Calu3 (cell line): ENCODE measurements at regions of chr3 and their contacts with region 1.

Region 1: DNA sequence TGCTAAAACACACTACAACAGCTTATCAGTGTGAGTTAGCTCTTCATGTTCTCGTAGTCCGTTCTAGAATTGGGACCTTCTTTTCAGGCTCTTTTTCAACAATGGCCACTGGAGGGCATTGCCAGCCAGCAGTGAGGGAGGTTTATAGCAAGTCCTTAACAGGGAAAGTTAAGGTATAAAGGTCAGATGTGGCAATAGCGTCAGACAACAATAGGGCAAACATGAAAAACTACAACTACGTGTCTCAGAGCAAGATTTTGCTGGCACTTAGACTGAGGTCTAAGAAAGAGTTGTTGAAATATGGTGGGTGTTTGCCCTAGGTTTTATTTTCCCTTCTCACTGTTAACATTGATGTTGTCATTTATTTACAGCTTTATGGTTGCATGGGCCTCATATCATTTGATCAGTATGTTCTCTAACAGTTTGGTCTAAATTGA is 161.4 kb downstream of the GMNC start:
- DNase-seq: peak; percentile 81
- H3K4me3 Mint-ChIP-seq: no peak overlapping the region
- H3K27ac Mint-ChIP-seq: peak overlapping the region; percentile 33
- H3K4me1 Mint-ChIP-seq: peaks cover 43% of the 10 kb centered on the region
- H3K27me3 Mint-ChIP-seq: no peaks in the 10 kb centered on the region
- CTCF ChIP-seq: peak; percentile 85

Region 2: DNA sequence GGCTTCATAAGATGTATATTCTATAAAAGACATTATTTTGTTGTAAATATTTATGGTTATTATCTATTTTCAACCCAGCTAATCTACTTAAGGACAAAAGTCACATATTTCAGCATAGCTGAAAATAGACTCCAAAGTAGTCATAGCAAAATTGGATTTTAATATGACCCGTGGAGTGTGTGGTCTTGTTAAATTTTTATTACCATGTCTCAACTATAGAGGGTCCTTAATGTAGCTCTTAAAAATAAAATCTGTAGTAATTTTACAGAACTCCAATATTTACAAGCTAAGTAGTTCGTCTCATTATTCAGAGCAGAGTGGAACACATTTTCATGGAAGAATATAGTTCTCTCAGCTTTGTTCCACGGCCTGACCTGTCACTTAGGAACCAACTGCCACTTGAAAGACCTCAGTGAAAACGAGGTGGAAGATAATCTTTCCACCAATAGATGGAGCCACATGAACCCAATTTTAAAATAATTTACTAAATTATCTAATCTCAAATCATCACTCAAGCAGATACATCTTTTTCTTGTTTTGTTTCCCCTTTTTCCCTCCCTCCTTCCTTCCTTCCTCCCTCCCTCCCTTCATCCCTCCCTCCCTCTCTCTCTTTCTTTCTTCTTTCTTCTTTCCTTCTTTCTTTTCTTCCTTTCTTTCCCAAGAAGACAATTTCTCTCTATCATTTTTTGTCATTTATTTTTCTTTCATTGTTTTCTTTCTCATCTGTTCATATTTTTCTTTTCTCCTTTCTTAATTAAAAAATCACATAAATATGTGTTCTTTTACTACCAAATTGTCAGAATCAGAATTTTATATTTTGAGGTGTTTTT is 476.0 kb before region 1 on chr3:
- CTCF ChIA-PET with region 1: interaction called, 3 read pairs
- intact Hi-C with region 1: loop called (anchors 5 kb)
- DNase-seq: peak; percentile 37
- H3K4me3 Mint-ChIP-seq: no peak overlapping the region
- H3K27ac Mint-ChIP-seq: no peak overlapping the region
- H3K4me1 Mint-ChIP-seq: peaks cover 7% of the 10 kb centered on the region
- H3K27me3 Mint-ChIP-seq: no peaks in the 10 kb centered on the region
- CTCF ChIP-seq: peak; percentile 58

Region 3: GRCh38 chr3:190566043-190566933 is 134.8 kb before region 1 on chr3:
- CTCF ChIA-PET with region 1: interaction called, 5 read pairs
- intact Hi-C with region 1: loop called (anchors 5 kb)
- DNase-seq: peak; percentile 98
- H3K4me3 Mint-ChIP-seq: peak overlapping the region; percentile 7
- H3K27ac Mint-ChIP-seq: peak overlapping the region; percentile 84
- H3K4me1 Mint-ChIP-seq: peaks cover 62% of the 10 kb centered on the region
- H3K27me3 Mint-ChIP-seq: no peaks in the 10 kb centered on the region
- CTCF ChIP-seq: no peak

Region 4: GRCh38 chr3:190862209-190863118 is 161.3 kb after region 1 on chr3 and contains the start of gene GMNC:
- CTCF ChIA-PET with region 1: interaction called, 9 read pairs
- intact Hi-C with region 1: loop called (anchors 1 kb)
- DNase-seq: peak; percentile 93
- H3K4me3 Mint-ChIP-seq: peak within 1 kb of the TSS; percentile 53
- H3K27ac Mint-ChIP-seq: peak within 1 kb of the TSS; percentile 5
- H3K4me1 Mint-ChIP-seq: peaks cover 33% of the 10 kb centered on the region
- H3K27me3 Mint-ChIP-seq: no peaks in the 10 kb centered on the region
- CTCF ChIP-seq: no peak
- total RNA-seq, gene GMNC: 0.24 and 0.29 TPM in 2 replicates

Region 5: GRCh38 chr3:191301017-191301416 is 599.9 kb after region 1 on chr3:
- CTCF ChIA-PET with region 1: no interaction called
- intact Hi-C with region 1: no loop called
- DNase-seq: no peak
- H3K4me3 Mint-ChIP-seq: no peak overlapping the region
- H3K27ac Mint-ChIP-seq: no peak overlapping the region
- H3K4me1 Mint-ChIP-seq: no peaks in the 10 kb centered on the region
- H3K27me3 Mint-ChIP-seq: no peaks in the 10 kb centered on the region
- CTCF ChIP-seq: no peak